IMR-90 (cell line): ENCODE measurements at regions of chr13 and their contacts with region 1.

Region 1: DNA sequence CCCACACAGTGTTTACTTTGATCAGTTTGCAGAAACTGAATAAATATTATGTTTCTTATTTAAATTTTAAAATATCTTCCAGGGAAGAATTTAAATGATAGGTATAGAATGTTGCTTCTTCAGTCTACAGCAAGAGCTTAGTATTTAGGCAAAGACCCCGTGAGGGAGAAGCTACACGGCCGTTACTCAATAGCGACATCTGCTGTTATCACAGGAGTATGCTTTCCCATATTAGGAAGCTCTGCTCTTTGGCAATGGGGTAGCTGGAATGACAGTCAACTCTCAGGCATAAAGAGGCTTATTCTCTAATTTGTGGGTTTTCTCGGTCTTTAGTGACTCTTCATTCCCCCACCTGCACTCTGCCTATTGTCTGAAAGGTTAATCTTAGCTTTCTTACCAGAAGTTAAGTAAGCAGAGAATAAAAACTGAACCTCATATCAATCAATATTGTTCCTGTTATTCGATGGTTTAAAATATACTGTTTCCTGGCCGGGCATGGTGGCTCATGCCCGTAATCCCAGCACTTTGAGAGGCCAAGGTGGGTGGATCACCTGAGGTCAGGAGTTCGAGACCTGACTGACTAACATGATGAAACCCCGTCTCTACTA is 13.2 kb upstream of the LHFPL6 start:
- DNase-seq: peak; percentile 68
- ATAC-seq: peak; percentile 92
- H3K4me3 ChIP-seq: no peak overlapping the region
- H3K27ac ChIP-seq: no peak overlapping the region
- H3K4me1 ChIP-seq: no peaks in the 10 kb centered on the region
- H3K27me3 ChIP-seq: peaks cover 4% of the 10 kb centered on the region; the same call in 1 of the 2 replicates
- CTCF ChIP-seq: peak; percentile 93
- POLR2A ChIP-seq: no peak
- RAD21 ChIP-seq: peak; percentile 89

Region 2: GRCh38 chr13:38730332-38730731 is 885.9 kb before region 1 on chr13:
- CTCF ChIA-PET with region 1: no interaction called
- POLR2A ChIA-PET with region 1: no interaction called
- dilution Hi-C with region 1: no loop called
- in situ Hi-C with region 1: no loop called
- intact Hi-C with region 1: no loop called
- DNase-seq: no peak
- ATAC-seq: no peak
- H3K4me3 ChIP-seq: no peak overlapping the region
- H3K27ac ChIP-seq: no peak overlapping the region
- H3K4me1 ChIP-seq: no peaks in the 10 kb centered on the region
- H3K27me3 ChIP-seq: no peaks in the 10 kb centered on the region
- CTCF ChIP-seq: no peak
- POLR2A ChIP-seq: no peak
- RAD21 ChIP-seq: no peak

Region 3: DNA sequence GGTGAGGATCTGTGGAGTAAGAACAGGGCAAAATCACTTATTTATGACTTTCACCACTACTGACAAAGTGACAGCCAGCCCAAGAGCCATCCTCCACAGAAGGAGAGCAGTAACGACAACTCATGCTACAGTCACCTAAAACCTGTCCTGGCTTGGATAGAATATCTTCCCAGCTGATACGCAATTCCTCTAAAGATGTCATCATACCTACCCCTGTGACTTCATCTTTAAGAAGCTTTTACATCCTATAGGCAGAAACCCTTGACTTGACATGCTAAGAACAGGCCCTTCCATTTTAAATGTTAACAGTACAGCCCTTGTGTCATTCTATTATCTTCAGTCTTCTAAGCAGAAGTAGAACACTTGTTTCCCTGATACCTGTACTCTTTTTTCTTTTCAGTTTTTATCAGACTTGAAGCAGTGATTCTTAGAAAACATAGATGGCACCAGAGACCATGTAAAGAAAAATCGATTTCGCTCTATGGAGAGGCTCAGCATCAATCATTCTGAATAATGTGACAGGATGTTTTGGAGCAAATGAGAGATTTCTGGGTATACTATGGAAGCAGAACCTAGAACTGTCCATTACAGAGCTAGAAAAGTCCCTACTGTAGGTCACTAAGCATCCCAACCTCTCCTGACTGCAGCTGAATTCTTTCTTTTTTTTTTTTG is 645.7 kb before region 1 on chr13:
- CTCF ChIA-PET with region 1: no interaction called
- POLR2A ChIA-PET with region 1: no interaction called
- dilution Hi-C with region 1: no loop called
- in situ Hi-C with region 1: no loop called
- intact Hi-C with region 1: loop called (anchors 5 kb)
- DNase-seq: no peak
- ATAC-seq: no peak
- H3K4me3 ChIP-seq: no peak overlapping the region
- H3K27ac ChIP-seq: no peak overlapping the region
- H3K4me1 ChIP-seq: no peaks in the 10 kb centered on the region
- H3K27me3 ChIP-seq: no peaks in the 10 kb centered on the region
- CTCF ChIP-seq: no peak
- POLR2A ChIP-seq: no peak
- RAD21 ChIP-seq: no peak

Region 4: GRCh38 chr13:39051157-39051556 is 565.0 kb before region 1 on chr13:
- CTCF ChIA-PET with region 1: interaction called, 8 read pairs
- POLR2A ChIA-PET with region 1: no interaction called
- dilution Hi-C with region 1: no loop called
- in situ Hi-C with region 1: loop called (anchors 5 kb)
- intact Hi-C with region 1: loop called (anchors 1 kb)
- DNase-seq: peak; percentile 50
- ATAC-seq: peak; percentile 75
- H3K4me3 ChIP-seq: no peak overlapping the region
- H3K27ac ChIP-seq: no peak overlapping the region
- H3K4me1 ChIP-seq: no peaks in the 10 kb centered on the region
- H3K27me3 ChIP-seq: no peaks in the 10 kb centered on the region
- CTCF ChIP-seq: peak; percentile 55
- POLR2A ChIP-seq: no peak
- RAD21 ChIP-seq: peak; percentile 60

Region 5: DNA sequence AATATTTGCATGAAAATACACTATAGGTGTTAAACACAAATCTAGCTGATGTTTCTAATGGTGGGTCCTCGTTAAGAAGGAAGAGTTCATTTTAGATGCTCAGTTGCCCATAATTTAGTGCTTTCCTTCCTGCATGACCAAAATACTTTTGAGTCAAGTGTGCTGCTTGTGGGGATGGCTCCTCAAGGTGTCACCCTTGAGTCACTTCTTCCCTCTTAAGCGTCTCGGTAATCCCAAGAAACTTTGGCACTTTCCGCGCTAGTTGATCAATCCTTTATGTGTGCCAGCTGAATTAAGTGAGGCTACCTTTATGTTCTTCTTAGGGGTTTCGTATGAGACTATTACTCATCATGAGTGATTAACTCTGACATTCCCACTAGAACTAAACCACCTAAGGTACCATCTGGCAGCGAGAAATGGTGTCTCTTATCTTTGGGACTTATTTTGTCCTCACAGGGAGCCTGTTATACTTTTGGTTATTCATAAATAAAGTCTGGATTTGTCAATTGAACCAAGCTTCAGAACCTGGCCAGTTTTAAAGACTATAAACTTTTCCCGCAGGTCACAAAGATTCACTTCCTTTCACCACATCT is 471.2 kb before region 1 on chr13:
- CTCF ChIA-PET with region 1: interaction called, 38 read pairs
- POLR2A ChIA-PET with region 1: no interaction called
- dilution Hi-C with region 1: no loop called
- in situ Hi-C with region 1: loop called (anchors 5 kb)
- intact Hi-C with region 1: loop called (anchors 1 kb)
- DNase-seq: peak; percentile 70
- ATAC-seq: peak; percentile 91
- H3K4me3 ChIP-seq: no peak overlapping the region
- H3K27ac ChIP-seq: no peak overlapping the region
- H3K4me1 ChIP-seq: no peaks in the 10 kb centered on the region
- H3K27me3 ChIP-seq: peaks cover 6% of the 10 kb centered on the region
- CTCF ChIP-seq: peak; percentile 89
- POLR2A ChIP-seq: 0 out of 2 replicates have a peak, but pooled peaks have one; percentile 25
- RAD21 ChIP-seq: peak; percentile 88

Region 6: GRCh38 chr13:39263033-39263432 is 353.2 kb before region 1 on chr13:
- CTCF ChIA-PET with region 1: interaction called, 5 read pairs
- POLR2A ChIA-PET with region 1: no interaction called
- dilution Hi-C with region 1: no loop called
- in situ Hi-C with region 1: no loop called
- intact Hi-C with region 1: loop called (anchors 1 kb)
- DNase-seq: peak; percentile 23
- ATAC-seq: peak; percentile 93
- H3K4me3 ChIP-seq: no peak overlapping the region
- H3K27ac ChIP-seq: no peak overlapping the region
- H3K4me1 ChIP-seq: peaks cover 6% of the 10 kb centered on the region
- H3K27me3 ChIP-seq: no peaks in the 10 kb centered on the region
- CTCF ChIP-seq: peak; percentile 62
- POLR2A ChIP-seq: no peak
- RAD21 ChIP-seq: peak; percentile 51

Region 7: GRCh38 chr13:39282400-39282972 is 333.7 kb before region 1 on chr13:
- CTCF ChIA-PET with region 1: interaction called, 6 read pairs
- POLR2A ChIA-PET with region 1: no interaction called
- dilution Hi-C with region 1: no loop called
- in situ Hi-C with region 1: loop called (anchors 5 kb)
- intact Hi-C with region 1: no loop called
- DNase-seq: no peak
- ATAC-seq: no peak
- H3K4me3 ChIP-seq: no peak overlapping the region
- H3K27ac ChIP-seq: no peak overlapping the region
- H3K4me1 ChIP-seq: no peaks in the 10 kb centered on the region
- H3K27me3 ChIP-seq: no peaks in the 10 kb centered on the region; the same call in 1 of the 2 replicates
- CTCF ChIP-seq: no peak
- POLR2A ChIP-seq: no peak
- RAD21 ChIP-seq: no peak

Region 8: DNA sequence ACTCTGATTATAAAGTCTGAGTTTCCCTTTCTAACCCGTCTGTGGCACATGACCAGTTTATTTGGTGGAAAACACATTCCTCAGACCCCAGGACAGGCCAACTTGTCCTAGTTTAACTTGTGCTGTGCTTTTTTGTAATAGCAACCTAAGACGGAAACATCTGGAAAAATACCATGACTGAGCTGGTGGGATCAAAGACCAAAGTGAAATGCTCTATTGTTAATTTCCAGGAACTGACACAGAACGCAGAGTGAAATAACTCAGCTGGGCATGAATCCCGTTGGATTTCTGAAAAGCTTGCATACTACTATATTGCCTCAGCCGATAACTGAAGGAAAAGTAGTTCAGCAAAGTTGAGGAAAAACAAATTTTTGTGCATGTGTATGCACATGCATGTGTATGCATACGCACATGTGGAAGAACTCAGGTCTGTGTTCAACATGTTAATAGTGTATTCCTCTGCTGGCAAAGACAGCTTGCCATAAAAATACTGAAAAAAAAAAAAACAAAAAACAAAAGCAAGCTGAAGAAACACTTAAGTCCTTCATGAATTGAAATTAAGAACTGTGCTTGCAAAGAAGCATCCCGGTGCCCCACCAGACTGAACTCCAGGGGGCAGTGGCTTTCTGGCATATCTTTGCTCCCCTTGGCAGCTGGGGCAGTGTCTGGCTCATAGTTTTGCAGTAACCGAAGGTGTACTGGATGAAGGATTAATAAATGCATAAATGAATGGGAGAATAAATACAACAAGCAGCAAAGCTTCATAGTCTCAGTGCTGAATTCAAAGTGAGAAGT is 201.0 kb before region 1 on chr13:
- CTCF ChIA-PET with region 1: interaction called, 6 read pairs
- POLR2A ChIA-PET with region 1: no interaction called
- dilution Hi-C with region 1: no loop called
- in situ Hi-C with region 1: no loop called
- intact Hi-C with region 1: loop called (anchors 1 kb)
- DNase-seq: peak; percentile 43
- ATAC-seq: no peak; the same call in 1 of the 2 replicates
- H3K4me3 ChIP-seq: no peak overlapping the region
- H3K27ac ChIP-seq: no peak overlapping the region
- H3K4me1 ChIP-seq: peaks cover 2% of the 10 kb centered on the region; the same call in 1 of the 2 replicates
- H3K27me3 ChIP-seq: no peaks in the 10 kb centered on the region
- CTCF ChIP-seq: peak; percentile 53
- POLR2A ChIP-seq: no peak
- RAD21 ChIP-seq: peak; percentile 67